HepG2 (cell line): ENCODE measurements at regions of chr9 and their contacts with region 1.

Region 1: DNA sequence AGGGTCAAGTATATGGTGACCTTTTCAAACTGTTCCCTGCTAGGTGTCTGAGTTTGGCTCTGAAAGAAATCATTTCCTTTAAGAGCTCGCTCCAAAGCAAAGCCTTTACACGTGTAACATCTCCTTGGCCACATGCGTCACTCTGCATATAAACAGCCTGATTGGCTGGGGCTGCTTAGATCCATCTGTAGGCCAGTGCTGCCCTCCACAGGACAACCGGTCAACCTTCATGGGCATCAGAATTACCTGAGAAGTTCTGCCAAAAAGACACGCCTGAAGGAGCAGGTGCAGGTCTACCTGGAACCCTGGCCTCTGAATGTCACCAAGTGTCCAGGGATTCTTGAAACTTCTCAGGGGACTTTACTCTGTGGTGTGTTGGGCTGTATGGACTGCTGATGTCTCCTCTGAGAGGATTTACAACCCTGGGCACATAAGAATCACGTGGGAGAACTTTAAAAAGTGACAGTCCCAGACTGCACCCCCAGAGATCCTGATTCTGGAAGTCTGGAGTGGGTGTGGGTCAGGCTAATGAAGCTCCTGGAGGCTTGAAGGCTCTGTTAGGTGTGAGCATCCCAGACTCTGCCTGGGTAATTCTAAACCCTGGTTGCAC is 497.6 kb downstream of the GADD45G start:
- DNase-seq: peak; percentile 71
- ATAC-seq: peak; percentile 98
- H3K4me3 ChIP-seq: no peak overlapping the region
- H3K27ac ChIP-seq: no peak overlapping the region
- H3K4me1 ChIP-seq: no peaks in the 10 kb centered on the region
- H3K27me3 ChIP-seq: no peaks in the 10 kb centered on the region
- CTCF ChIP-seq: peak; percentile 86
- EP300 ChIP-seq: no peak
- POLR2A ChIP-seq: no peak
- RAD21 ChIP-seq: peak; percentile 76

Region 2: DNA sequence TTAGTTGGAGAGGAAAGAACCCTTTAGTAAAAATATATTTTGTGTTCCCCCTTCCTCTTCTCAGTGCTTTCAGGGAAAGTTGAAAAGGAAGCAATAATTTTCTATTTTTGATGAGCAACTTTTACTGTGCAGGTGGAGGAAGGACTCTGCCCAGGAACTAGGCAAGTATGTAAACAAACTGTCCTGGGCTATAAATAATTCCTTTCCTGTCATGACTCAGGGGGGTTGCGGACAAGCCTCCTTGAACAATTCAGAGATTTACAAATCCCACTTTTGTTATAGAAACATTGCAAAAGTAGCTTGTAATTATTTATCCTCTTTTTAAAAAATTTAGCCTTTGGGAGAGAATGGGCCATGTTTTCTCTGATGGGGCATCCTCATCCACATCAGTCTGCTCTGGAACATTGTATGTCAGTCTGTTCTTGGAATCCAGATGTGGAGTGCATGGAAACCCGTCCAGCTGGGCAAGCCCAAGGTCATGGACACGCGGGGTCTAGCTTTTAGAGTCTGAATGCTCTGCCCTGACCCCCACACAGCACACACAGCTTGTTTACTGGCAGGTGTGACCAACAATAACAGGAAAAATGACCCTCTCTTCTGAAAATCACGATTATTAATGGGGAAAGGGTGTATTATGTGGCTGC is 370.0 kb before region 1 on chr9:
- CTCF ChIA-PET with region 1: no interaction called
- POLR2A ChIA-PET with region 1: no interaction called
- in situ Hi-C with region 1: no loop called
- intact Hi-C with region 1: loop called (anchors 10 kb)
- DNase-seq: no peak
- ATAC-seq: no peak
- H3K4me3 ChIP-seq: no peak overlapping the region
- H3K27ac ChIP-seq: no peak overlapping the region
- H3K4me1 ChIP-seq: peaks cover 26% of the 10 kb centered on the region
- H3K27me3 ChIP-seq: no peaks in the 10 kb centered on the region; a peak in 1 of 5 replicates
- CTCF ChIP-seq: no peak
- EP300 ChIP-seq: no peak
- POLR2A ChIP-seq: no peak
- RAD21 ChIP-seq: no peak

Region 3: DNA sequence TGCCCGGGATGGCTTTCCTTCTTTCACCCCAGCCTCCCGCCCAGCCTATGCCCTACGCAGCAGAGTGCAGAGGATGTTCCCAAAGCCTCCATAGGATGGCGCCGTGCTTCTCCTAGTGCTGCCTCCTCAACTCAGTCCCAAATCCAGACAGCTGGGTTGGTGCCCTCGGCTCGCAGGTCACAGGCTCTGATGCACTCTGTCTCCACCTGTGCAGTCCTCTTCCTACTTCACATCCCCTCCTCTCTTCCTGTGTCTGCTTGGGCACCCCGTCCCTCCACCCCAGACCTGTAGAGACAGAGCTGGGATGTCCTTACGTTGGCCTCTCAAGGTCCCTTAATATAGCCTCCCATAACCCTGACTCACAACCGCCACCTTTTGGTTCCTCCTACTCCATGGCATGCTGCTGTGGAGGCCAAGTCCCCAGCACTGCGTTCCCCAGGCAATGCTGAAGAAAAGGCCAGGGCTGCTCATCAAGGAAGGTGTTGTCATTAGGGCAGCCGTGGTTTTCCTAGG is 183.2 kb before region 1 on chr9:
- CTCF ChIA-PET with region 1: no interaction called
- POLR2A ChIA-PET with region 1: no interaction called
- in situ Hi-C with region 1: loop called (anchors 10 kb)
- intact Hi-C with region 1: no loop called
- DNase-seq: peak; percentile 6
- ATAC-seq: peak; percentile 77
- H3K4me3 ChIP-seq: no peak overlapping the region
- H3K27ac ChIP-seq: no peak overlapping the region
- H3K4me1 ChIP-seq: peaks cover 10% of the 10 kb centered on the region
- H3K27me3 ChIP-seq: no peaks in the 10 kb centered on the region; a peak in 1 of 5 replicates
- CTCF ChIP-seq: peak; percentile 49
- EP300 ChIP-seq: no peak
- POLR2A ChIP-seq: no peak
- RAD21 ChIP-seq: no peak